PC-9 (cell line): ENCODE measurements at regions of chr6 and their contacts with region 1.

Region 1: DNA sequence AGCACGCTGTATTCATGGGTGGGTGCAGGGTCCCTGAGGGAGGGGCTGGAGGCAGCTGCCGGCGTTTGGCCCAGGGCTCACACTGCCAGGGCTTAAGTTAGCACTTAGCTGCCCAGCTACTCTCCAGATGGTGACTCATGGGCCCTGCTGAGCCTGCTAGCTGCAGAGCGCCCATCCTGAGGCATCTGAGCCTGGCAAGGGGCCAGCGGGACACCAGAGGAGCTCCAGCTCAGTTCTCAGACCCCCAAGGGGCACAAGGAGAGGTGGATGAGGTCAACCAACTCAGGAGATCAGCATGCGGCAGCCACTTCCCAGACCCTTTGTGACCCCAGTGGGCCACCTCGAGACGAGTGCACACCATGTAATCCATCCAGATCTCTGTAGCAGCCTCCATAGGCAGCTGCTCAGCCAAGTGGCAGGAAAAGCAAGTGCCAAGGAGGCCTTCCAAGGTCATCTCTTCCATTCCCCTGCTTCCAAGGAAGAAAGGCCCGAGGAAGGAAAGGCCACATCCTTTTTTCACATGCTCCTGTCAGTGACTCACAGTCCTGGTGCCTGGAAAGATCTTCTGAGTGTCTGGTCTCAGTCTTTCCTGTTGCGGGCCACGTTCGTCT is 35.3 kb downstream of the FOXP4 start:
- DNase-seq: peak; percentile 81 to 83
- H3K4me3 ChIP-seq: no peak overlapping the region
- H3K27ac ChIP-seq: peak overlapping the region; percentile 48
- H3K4me1 ChIP-seq: peaks cover 67% of the 10 kb centered on the region
- H3K27me3 ChIP-seq: no peaks in the 10 kb centered on the region
- CTCF ChIP-seq: no peak

Region 2: DNA sequence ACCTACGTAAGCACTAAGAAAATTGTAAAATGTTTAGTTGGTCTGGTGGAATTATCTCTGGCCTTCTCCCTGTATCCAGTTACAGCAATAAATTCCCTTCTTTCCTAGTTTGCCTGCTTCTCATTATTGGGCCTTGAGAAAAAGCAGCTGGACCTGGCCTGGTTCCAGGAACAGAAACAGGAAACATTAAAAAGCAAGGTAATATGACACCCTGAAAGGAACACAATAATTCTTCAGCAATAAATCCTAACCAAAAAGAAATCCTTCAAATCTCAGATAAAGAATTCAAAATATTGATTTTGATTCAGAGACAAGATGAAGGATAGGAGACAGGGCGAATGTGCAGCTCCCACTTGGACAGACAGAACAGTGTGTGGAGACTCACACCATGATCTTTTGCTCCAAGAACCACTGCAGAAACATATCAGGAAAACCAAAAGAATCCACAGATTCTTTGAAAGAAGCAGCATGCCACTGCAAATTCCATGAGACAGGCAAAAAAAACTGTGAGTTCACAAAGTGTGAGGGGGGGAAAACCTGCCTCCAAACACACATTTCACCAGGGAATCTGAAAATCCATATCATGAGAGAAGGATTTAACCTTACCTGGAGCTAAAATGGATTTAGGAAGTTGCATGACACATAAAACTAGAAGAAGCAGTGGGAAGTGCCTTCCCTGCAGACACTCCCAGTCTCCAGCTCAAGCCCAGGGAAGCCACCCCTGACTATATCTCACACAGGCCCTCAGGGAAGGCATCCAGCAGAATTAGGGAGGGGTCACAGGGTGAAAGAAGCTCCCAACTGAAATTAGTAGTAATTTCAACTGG is 323.9 kb before region 1 on chr6:
- CTCF ChIA-PET with region 1: no interaction called
- POLR2A ChIA-PET with region 1: no interaction called
- intact Hi-C with region 1: no loop called
- DNase-seq: peak in 1 of 2 experiments; percentile 26
- H3K4me3 ChIP-seq: no peak overlapping the region
- H3K27ac ChIP-seq: no peak overlapping the region
- H3K4me1 ChIP-seq: no peaks in the 10 kb centered on the region; the same call in 1 of the 2 replicates
- H3K27me3 ChIP-seq: no peaks in the 10 kb centered on the region
- CTCF ChIP-seq: no peak

Region 3: DNA sequence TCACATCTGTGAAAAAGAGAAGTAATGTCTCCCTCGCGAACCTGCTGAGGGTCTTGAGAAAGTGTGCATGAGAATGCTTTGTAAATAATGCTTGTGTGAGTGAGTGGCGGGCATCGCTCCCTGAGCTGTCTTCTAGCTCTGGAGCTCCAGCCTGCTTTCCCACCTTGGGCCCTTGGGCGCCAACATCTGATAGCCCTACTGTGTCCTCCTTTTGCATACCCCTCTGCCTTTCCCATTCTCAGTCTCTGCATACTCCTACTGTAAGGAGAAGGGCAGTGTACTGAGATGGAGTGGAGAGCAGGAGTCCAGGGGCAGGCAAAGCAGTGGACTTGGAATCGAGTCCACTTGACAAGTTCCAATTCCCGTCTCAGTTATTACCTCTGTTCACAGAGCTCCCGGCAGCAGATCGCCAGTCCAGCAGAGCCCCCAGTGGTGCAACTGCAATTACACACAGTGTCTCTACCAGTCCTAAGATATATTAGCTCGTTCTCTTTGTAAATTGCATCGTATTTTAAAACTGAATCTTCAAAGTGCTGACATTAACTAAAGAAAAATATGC is 246.9 kb before region 1 on chr6:
- CTCF ChIA-PET with region 1: no interaction called
- POLR2A ChIA-PET with region 1: no interaction called
- intact Hi-C with region 1: no loop called
- DNase-seq: no peak
- H3K4me3 ChIP-seq: no peak overlapping the region
- H3K27ac ChIP-seq: no peak overlapping the region
- H3K4me1 ChIP-seq: no peaks in the 10 kb centered on the region
- H3K27me3 ChIP-seq: peaks cover 77% of the 10 kb centered on the region
- CTCF ChIP-seq: 0 out of 2 replicates have a peak, but pooled peaks have one; percentile 13

Region 4: GRCh38 chr6:41545703-41546474 is 35.6 kb before region 1 on chr6 and contains the start of gene FOXP4:
- CTCF ChIA-PET with region 1: no interaction called
- POLR2A ChIA-PET with region 1: no interaction called
- intact Hi-C with region 1: loop called (anchors 5 kb)
- DNase-seq: peak; percentile 74 to 84
- H3K4me3 ChIP-seq: peak within 1 kb of the TSS; percentile 80
- H3K27ac ChIP-seq: no peak within 1 kb of the TSS
- H3K4me1 ChIP-seq: no peaks in the 10 kb centered on the region
- H3K27me3 ChIP-seq: no peaks in the 10 kb centered on the region
- CTCF ChIP-seq: no peak
- total RNA-seq, gene FOXP4: 26.0 and 29.4 TPM in 2 replicates

Region 5: DNA sequence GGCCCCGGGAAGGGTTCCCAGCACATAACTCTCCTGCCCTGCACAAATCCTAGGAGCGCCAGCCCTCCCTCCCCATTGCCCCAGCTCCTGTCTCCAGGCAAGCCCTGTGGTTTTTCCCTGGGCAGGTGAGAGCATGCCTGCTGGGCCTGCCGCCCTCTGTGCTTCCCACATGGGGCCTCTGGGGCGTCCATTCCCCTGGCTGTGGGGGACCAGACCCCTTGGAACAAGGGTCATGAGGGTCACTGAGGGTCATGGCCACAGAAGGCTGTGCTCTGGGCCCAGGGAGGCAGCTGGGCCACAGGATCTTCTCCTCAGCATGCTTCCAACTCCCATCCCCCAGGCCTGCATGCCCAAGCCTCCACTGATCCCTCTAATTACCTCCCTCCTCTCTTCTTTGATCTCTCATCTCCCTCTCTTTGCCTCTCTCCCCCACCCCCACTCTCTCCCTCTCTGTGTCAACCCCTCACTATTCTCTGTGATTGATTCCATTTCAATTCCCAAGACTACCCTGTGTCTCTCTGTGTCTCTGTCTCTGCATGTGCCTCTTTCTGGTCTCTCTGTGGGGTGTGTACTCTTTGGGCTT is 62.9 kb after region 1 on chr6:
- CTCF ChIA-PET with region 1: interaction called, 10 read pairs
- POLR2A ChIA-PET with region 1: no interaction called
- intact Hi-C with region 1: no loop called
- DNase-seq: no peak
- H3K4me3 ChIP-seq: no peak overlapping the region
- H3K27ac ChIP-seq: no peak overlapping the region
- H3K4me1 ChIP-seq: no peaks in the 10 kb centered on the region
- H3K27me3 ChIP-seq: no peaks in the 10 kb centered on the region
- CTCF ChIP-seq: no peak

Region 6: GRCh38 chr6:41901882-41902519 is 320.5 kb after region 1 on chr6:
- CTCF ChIA-PET with region 1: no interaction called
- POLR2A ChIA-PET with region 1: no interaction called
- intact Hi-C with region 1: no loop called
- DNase-seq: no peak
- H3K4me3 ChIP-seq: no peak overlapping the region
- H3K27ac ChIP-seq: no peak overlapping the region
- H3K4me1 ChIP-seq: peaks cover 4% of the 10 kb centered on the region; the same call in 1 of the 2 replicates
- H3K27me3 ChIP-seq: no peaks in the 10 kb centered on the region
- CTCF ChIP-seq: peak; percentile 21; the same call in 1 of the 2 replicates

Region 7: GRCh38 chr6:42088101-42088591 is 506.7 kb after region 1 on chr6:
- CTCF ChIA-PET with region 1: no interaction called
- POLR2A ChIA-PET with region 1: no interaction called
- intact Hi-C with region 1: no loop called
- DNase-seq: peak; percentile 90 to 95
- H3K4me3 ChIP-seq: no peak overlapping the region
- H3K27ac ChIP-seq: peak overlapping the region; percentile 78
- H3K4me1 ChIP-seq: peaks cover 40% of the 10 kb centered on the region
- H3K27me3 ChIP-seq: no peaks in the 10 kb centered on the region
- CTCF ChIP-seq: no peak